ENCODE measurements at regions of chr2 and their contacts with region 1.

Region 1: DNA sequence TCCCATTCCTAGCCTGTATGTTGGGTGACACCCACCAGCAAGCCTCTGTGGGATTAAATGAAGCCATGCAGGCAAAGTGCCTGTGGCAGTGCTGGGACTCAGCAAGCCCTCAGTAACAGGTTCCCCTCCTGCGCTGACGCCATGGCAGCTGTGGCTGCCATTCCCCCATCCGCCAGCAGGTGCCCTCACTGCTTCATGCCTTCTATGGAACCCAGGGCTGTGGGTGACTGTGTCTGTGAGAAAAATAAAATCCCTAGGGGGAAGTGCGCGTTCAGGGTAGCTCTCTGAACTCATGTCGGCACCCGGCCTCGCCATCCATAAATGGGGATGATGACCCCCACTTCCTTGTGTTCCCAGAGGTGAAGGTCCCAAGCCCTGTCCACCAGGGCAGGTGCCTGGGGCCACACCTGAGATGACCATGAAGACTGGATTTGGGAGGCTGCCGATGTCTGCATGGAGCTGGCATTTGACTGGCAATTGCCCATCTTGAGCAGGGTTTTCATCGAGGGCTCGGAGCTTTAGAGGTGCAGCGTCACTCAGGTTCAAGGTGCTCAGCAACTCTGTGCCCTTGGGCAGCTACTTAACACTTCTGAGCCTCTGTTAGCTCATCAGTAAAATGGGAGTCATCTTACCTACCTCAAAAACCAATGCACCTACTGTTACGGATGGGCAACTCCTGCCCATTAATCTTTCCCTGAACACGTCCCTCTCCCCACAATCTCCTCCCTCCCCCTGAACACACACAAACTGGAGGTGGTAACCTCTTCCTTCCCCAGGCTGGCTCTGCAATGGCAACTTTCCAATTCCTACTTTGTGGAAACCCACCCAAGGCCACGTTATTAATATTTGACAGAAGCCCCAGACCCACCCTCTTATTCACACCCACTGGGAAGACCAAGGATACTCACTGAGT is 2.9 kb upstream of the MAL start:
- DNase-seq: peak; percentile 87
- ATAC-seq: peak; percentile 63
- H3K4me3 Mint-ChIP-seq: no peak overlapping the region
- H3K27ac Mint-ChIP-seq: no peak overlapping the region
- H3K4me1 Mint-ChIP-seq: peaks cover 41% of the 10 kb centered on the region
- H3K27me3 Mint-ChIP-seq: peaks cover 56% of the 10 kb centered on the region
- CTCF ChIP-seq: peak; percentile 90

Region 2: DNA sequence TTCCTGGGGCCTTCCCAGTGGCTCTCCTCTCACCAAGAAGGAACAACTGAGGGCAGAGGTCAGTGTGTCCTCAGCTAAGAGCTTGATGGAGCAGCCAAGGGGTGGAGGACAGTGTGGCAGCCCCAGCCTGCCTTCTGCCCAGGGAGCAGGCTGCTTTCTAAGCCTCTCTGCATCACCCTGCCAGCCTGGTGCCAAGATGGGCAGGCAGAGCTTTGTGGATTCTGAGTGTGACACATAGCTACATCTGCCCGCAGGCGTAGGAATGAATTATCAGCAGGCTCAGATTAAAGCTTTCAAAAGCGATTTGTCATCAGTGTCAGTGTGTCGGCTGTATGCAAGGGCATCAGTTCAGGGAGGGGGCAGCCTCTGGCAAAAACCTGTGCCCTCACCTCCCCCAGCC is 11.7 kb after region 1 on chr2:
- CTCF ChIA-PET with region 1: interaction called, 13 read pairs
- POLR2A ChIA-PET with region 1: interaction called, 3 read pairs
- DNase-seq: no peak
- ATAC-seq: no peak
- H3K4me3 Mint-ChIP-seq: no peak overlapping the region
- H3K27ac Mint-ChIP-seq: no peak overlapping the region
- H3K4me1 Mint-ChIP-seq: no peaks in the 10 kb centered on the region
- H3K27me3 Mint-ChIP-seq: peaks cover 20% of the 10 kb centered on the region
- CTCF ChIP-seq: no peak

Region 3: DNA sequence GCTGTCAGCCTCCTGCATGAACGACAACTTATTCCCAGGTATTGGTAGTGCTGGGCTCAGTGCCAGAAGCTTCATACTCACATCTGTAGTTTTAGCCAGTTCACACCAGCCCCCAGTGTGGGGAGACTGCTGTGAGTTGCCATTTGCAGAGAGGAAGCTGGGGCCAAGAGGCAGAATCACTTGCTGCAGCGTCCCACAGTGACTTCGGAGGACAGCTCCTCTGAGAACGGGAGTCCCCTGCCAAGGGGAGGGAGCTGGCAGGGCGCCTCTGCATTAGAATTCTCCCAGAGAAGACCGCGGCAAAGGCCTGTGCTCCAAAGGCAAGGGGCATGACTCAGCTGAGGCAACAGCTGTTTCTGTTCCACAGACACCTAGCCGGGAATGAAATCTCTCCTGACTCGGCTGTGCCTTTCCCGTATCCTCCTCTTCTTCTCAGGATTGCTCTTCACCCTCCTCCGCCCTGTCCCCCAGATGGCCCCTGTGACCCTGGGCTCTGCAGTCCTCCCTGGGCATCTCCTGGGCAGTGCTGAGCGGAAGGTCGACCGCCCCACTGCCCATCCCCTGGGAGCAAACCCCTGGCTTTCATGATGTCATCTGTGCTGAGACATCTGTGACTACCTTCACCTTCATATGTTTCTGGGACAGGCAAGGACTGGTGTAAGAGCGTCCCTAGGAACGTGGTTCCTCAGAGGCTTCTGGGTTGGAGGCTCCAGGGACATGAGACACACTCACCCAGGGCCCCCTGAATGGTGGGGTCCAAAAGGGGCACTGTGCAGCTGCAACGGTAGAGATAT is 20.9 kb after region 1 on chr2:
- CTCF ChIA-PET with region 1: interaction called, 70 read pairs
- POLR2A ChIA-PET with region 1: no interaction called
- DNase-seq: no peak
- ATAC-seq: no peak
- H3K4me3 Mint-ChIP-seq: no peak overlapping the region
- H3K27ac Mint-ChIP-seq: no peak overlapping the region
- H3K4me1 Mint-ChIP-seq: peaks cover 11% of the 10 kb centered on the region; the same call in 1 of the 2 replicates
- H3K27me3 Mint-ChIP-seq: peaks cover 2% of the 10 kb centered on the region; the same call in 1 of the 2 replicates
- CTCF ChIP-seq: no peak

Region 4: GRCh38 chr2:95062242-95063085 is 39.9 kb after region 1 on chr2:
- CTCF ChIA-PET with region 1: interaction called, 29 read pairs
- POLR2A ChIA-PET with region 1: no interaction called
- DNase-seq: no peak
- ATAC-seq: peak; percentile 74
- H3K4me3 Mint-ChIP-seq: no peak overlapping the region
- H3K27ac Mint-ChIP-seq: no peak overlapping the region
- H3K4me1 Mint-ChIP-seq: peaks cover 22% of the 10 kb centered on the region
- H3K27me3 Mint-ChIP-seq: no peaks in the 10 kb centered on the region; the same call in 1 of the 2 replicates
- CTCF ChIP-seq: no peak

Region 5: DNA sequence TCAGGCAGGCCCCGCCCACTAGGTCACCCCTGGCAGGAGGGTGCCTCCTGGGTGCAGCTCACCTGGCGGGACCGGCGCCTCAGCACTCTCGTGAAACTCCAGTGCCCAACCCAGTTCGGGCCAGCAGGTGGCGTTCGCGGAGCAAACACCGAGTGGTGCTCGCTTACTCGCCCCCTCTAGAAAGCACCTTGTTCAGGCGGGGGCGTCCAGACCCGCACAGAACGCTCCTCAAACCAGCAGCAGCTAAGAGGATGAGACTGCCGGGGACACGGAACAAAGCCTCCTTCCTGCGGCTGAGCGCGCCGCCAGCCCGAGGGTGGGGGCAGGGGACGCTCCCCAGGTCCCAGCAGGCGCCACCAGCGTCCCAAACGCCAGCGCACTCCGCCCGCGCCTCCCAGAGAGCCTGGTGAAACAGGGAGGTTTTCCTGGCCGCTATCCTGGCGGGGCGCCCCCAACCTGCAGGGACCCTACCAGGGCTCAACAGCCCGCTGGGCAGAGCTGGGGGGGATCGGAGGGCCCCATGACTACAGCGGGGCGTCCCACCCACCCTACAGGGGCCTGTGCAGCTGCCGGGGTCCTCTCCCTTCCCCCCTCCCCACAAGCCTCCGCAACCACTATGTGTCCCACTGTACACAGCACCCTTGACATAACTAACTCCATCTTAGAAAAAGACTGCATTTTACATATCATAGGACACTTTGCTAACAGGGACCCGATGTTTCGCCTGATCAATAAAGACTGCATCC is 54.4 kb after region 1 on chr2:
- CTCF ChIA-PET with region 1: interaction called, 44 read pairs
- POLR2A ChIA-PET with region 1: no interaction called
- DNase-seq: peak; percentile 92
- ATAC-seq: peak; percentile 87
- H3K4me3 Mint-ChIP-seq: peak overlapping the region; percentile 65
- H3K27ac Mint-ChIP-seq: no peak overlapping the region
- H3K4me1 Mint-ChIP-seq: peaks cover 24% of the 10 kb centered on the region
- H3K27me3 Mint-ChIP-seq: peaks cover 6% of the 10 kb centered on the region
- CTCF ChIP-seq: peak; percentile 78

Region 6: DNA sequence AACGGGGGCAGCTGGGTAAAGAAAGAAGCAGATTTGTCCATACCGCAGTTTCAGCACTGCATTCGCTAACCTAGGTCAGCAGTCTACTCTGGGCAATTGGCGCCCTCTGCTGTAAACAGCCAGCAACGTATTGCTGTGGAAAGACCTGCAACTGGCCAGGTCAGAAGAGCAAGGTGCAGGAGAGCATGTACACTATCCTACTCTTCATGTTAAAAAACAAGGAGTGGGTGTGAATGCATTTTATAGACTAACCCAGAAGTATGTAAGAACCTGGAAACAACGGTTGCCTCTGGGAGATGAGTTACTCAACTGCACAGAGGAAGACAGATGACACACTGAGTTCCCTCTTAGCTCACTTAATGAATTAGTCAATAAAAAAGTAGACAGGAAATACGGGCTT is 92.9 kb after region 1 on chr2:
- CTCF ChIA-PET with region 1: interaction called, 17 read pairs
- POLR2A ChIA-PET with region 1: no interaction called
- DNase-seq: peak; percentile 78
- ATAC-seq: peak; percentile 99
- H3K4me3 Mint-ChIP-seq: no peak overlapping the region
- H3K27ac Mint-ChIP-seq: 0 out of 2 replicates have a peak overlapping the region, but pooled peaks have one; percentile 41
- H3K4me1 Mint-ChIP-seq: peaks cover 27% of the 10 kb centered on the region
- H3K27me3 Mint-ChIP-seq: no peaks in the 10 kb centered on the region
- CTCF ChIP-seq: peak; percentile 66